Aorta (tissue), 5 donors: ENCODE measurements at regions of chr5 and their contacts with region 1.

Region 1: DNA sequence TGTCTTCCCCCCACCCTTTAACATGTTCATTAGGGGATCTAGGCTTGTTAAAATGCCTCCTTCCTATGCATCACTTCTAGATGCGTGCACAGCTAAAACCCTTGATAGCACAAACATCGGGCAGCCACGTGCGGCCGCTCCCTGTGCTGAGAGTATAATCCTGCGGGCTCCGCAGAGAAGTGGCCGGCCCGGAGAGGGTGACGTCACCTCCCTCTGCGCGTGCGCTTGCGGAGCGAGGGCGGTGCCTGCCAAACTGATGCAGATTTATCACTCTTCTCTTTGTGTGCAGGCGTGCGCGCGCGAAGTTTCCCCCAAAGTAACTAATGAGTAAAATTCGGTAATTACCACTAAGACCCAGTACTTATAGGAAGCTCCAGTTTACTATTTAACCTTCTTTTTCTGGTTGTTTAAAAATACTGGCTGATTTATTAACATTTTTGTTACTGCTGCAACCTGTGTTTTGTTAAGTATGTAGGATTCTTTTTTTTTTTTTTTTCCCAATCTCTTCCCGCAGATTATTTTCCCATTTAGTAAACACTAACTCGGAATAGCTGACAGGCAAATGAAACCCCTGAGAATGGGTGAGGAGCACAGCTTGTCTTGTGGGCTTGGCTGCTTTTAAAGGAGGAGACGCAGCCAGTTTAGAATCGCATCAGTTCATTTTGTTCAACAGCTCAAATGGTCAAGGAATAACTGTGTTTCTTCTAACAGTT is 121.6 kb downstream of the TRIO start:
- DNase-seq: peak; percentile 94 to 97
- ATAC-seq: peak; percentile 93
- H3K4me3 ChIP-seq: no peak overlapping the region
- H3K27ac ChIP-seq: no peak overlapping the region
- H3K4me1 ChIP-seq: peaks cover 10 to 20% of the 10 kb centered on the region in 2 donors
- H3K27me3 ChIP-seq: no peaks in the 10 kb centered on the region

Region 2: DNA sequence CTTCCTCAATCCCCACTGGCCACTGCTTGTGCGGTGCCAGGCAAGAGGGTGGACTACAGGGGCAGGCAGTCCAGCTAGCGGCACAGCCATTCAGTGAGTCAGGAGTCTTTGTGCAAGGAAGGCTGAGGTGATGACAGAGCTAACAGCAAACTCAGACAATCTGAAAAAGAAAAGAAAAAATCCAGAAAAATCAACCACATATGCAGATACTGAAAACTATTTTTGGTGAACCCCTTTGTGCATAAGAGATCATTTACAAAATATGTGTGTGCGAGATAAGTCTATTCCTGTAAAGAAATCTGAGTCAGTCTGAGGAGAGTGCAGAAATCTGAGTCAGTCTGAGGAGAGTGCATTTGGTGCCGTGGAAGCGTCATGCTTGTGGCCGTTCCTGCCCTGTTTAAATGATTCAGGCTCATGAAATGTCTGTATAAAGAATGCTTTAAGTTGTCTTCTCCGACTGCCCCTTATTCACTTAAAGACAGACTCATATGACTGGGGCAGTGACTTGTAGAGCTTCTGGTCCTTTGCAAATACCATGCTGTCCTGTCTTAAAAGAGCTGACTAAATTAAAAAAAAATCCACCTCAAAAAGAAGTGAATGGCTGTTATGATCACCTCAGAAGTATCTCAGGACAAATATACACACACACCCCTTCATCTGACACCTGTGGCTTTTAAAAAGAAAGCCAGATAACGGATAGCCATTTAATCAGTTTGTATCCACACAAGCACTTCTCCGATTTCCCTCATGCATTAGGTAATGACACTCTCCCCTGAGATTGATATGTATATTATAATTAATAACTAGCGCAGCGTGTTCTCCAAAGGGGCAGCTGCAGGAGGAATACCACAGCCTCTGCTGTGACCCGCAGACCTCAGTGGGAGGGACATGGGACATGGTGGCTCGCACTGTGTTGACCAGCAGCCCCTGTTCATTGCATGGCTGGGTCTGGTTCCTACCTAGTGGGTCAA is 74.3 kb before region 1 on chr5:
- intact Hi-C with region 1: loop called (anchors 5 kb)
- DNase-seq: peak; percentile 82 to 88
- ATAC-seq: peak; percentile 88
- H3K4me3 ChIP-seq: peak overlapping the region in 1 of 2 donors; percentile 11
- H3K27ac ChIP-seq: peak overlapping the region; percentile 95 to 96
- H3K4me1 ChIP-seq: peaks cover 0 to 6% of the 10 kb centered on the region in 2 donors
- H3K27me3 ChIP-seq: no peaks in the 10 kb centered on the region